ENCODE measurements at regions of chr2 and their contacts with region 1.

Region 1: DNA sequence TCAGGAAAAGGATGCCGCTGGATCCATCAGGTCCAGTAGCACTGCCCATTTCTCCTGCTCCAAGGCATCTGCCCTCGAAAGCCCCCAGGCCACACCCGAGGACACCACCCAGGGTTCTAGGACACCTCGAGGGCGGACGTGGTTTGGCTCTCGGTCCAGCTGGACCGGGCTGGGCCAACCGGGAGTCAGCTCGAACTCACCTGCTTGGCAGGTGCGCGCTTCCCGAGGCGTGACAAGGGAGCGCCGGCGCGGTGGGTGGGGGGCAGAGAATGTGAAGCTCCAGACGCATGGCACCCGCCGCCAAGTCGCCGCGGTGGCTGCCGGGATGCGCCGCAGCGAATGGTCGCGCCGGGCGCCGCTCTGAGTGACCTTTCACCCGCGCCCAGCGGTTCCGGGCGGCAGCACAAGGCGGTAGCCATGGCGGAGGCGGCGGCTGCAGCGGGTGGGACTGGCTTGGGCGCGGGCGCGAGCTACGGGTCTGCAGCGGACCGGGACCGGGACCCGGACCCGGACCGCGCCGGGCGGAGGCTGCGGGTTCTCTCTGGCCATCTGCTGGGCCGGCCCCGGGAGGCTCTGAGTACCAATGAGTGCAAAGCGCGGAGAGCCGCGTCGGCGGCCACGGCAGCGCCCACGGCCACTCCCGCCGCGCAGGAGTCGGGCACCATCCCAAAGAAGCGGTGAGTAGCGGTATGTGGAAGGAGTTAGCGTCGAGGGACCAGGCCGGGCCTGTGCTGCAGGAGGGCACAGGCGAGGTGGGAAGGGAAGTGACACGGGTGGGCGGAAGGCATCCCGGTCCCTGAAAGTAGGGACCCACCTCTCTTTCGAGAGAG is at the start of gene AGPS:
- DNase-seq: peak; percentile 66 to 76 (median 72)
- H3K4me3 ChIP-seq: peak within 1 kb of the TSS; percentile 78
- H3K4me3 Mint-ChIP-seq: peak within 1 kb of the TSS; percentile 92 to 98 (median 94)
- H3K27ac ChIP-seq: peak within 1 kb of the TSS; percentile 56
- H3K27ac Mint-ChIP-seq: peak within 1 kb of the TSS; percentile 79 to 94 (median 92)
- H3K4me1 ChIP-seq: peaks cover 47% of the 10 kb centered on the region
- H3K4me1 Mint-ChIP-seq: peaks cover 47 to 63% (median 53%) of the 10 kb centered on the region in 4 donors
- H3K27me3 ChIP-seq: no peaks in the 10 kb centered on the region
- H3K27me3 Mint-ChIP-seq: no peaks in the 10 kb centered on the region
- total RNA-seq, gene AGPS: 28.3 to 29.7 TPM

Region 2: GRCh38 chr2:177405029-177405692 is 12.6 kb after region 1 on chr2:
- CTCF ChIA-PET with region 1: interaction called, 17 read pairs
- POLR2A ChIA-PET with region 1: no interaction called
- intact Hi-C with region 1: no loop called
- DNase-seq: no peak
- H3K4me3 ChIP-seq: no peak overlapping the region
- H3K4me3 Mint-ChIP-seq: peak overlapping the region in 1 of 8 donors; percentile 48
- H3K27ac ChIP-seq: no peak overlapping the region
- H3K27ac Mint-ChIP-seq: peak overlapping the region in 1 of 7 donors; percentile 59
- H3K4me1 ChIP-seq: peaks cover 18% of the 10 kb centered on the region
- H3K4me1 Mint-ChIP-seq: peaks cover 47 to 62% (median 51%) of the 10 kb centered on the region in 4 donors
- H3K27me3 ChIP-seq: no peaks in the 10 kb centered on the region
- H3K27me3 Mint-ChIP-seq: no peaks in the 10 kb centered on the region

Region 3: DNA sequence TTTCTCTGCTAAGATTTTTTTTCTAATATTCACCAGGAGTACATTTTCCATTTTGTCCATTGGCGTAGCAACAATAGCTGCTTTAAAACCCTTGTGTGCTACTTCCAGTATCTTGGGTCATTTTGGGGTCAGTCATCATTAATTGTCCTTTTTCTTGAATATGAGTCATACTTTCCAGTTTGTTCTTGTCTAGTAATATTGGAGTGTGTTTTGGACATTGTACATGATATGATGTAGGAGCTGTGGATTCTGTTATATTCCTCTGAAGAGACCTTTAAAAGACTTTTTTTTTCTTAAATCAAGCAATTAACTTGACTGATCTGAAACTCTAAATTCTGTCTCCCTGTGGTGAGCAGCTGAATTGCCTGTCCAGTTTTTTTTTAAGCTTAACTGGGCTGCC is 40.8 kb after region 1 on chr2:
- CTCF ChIA-PET with region 1: no interaction called
- POLR2A ChIA-PET with region 1: no interaction called
- intact Hi-C with region 1: no loop called
- DNase-seq: no peak
- H3K4me3 ChIP-seq: no peak overlapping the region
- H3K4me3 Mint-ChIP-seq: no peak overlapping the region
- H3K27ac ChIP-seq: no peak overlapping the region
- H3K27ac Mint-ChIP-seq: no peak overlapping the region
- H3K4me1 ChIP-seq: no peaks in the 10 kb centered on the region
- H3K4me1 Mint-ChIP-seq: peaks cover 0 to 7% (median 1%) of the 10 kb centered on the region in 4 donors
- H3K27me3 ChIP-seq: no peaks in the 10 kb centered on the region
- H3K27me3 Mint-ChIP-seq: no peaks in the 10 kb centered on the region

Region 4: DNA sequence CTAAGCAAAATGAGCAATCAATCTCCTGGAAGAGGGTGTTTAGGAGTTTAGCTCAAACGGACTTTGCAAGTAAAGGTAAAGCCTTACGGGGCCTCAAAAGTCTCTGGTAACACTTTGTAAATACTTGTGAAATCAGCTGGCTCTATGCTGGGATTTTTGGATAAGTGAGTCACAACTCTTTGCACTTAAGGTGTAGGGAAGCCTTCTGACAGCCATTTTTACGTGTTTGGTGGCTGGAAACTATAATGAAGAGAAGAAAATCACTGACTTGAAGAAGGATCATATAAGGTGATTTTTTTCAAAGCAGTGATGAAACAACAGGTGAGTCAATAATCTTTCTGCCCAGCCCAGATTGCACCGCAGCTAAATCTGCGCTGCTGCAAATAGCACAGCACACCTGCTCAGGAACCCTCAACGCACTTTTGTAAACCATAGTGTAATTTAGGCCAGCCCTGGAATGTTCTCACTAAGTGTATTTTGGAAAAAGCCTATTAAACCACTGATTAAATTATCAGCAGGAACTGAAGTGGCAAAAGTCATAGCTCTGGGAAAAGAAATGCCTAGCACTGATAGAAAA is 218.8 kb after region 1 on chr2:
- CTCF ChIA-PET with region 1: no interaction called
- POLR2A ChIA-PET with region 1: no interaction called
- intact Hi-C with region 1: no loop called
- DNase-seq: no peak
- H3K4me3 ChIP-seq: no peak overlapping the region
- H3K4me3 Mint-ChIP-seq: no peak overlapping the region
- H3K27ac ChIP-seq: no peak overlapping the region
- H3K27ac Mint-ChIP-seq: no peak overlapping the region
- H3K4me1 ChIP-seq: no peaks in the 10 kb centered on the region
- H3K4me1 Mint-ChIP-seq: no peaks in the 10 kb centered on the region
- H3K27me3 ChIP-seq: no peaks in the 10 kb centered on the region
- H3K27me3 Mint-ChIP-seq: peaks cover 9 to 10% of the 10 kb centered on the region in 2 donors